CD4-positive, alpha-beta T cell (primary cell): ENCODE measurements at regions of chr17 and their contacts with region 1.

Region 1: DNA sequence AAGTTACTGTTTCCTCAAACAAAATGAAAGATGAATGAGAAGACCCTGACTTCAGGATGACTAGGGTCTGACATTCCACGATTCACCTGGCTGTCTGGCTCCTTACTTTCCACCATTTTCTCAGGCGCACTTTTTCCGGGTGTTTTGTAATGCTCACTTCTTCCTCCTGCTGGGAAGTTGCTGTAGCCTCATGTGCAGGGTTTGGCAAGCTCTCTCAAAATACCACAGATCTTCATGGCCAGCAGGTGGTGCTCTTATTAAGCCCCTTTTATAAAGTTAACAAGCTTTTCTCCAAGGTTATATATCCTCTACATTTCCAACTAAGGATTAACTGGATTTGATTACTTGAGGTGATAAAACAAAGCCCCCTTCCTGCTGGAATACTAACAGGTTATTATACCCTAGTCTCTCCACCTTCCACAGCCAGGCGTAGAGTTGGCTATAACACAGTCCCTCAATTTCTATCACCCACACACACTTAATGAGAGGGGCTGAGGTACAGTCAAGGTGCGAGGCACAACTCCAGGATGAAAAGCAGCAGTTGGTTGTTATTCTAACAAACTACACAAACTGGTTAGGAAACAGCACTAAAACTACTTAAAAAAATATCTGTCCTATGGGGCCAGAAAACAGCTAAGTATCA is 45.4 kb downstream of the STH start:
- DNase-seq: peak in 13 of 14 experiments; percentile 23 to 78 (median 48)
- ATAC-seq: peak; percentile 74
- H3K4me3 ChIP-seq: no peak overlapping the region
- H3K4me3 Mint-ChIP-seq: no peak overlapping the region
- H3K27ac ChIP-seq: no peak overlapping the region
- H3K27ac Mint-ChIP-seq: peak overlapping the region; percentile 54
- H3K4me1 ChIP-seq: no peaks in the 10 kb centered on the region
- H3K4me1 Mint-ChIP-seq: peaks cover 18% of the 10 kb centered on the region
- H3K27me3 ChIP-seq: no peaks in the 10 kb centered on the region
- H3K27me3 Mint-ChIP-seq: no peaks in the 10 kb centered on the region
- CTCF ChIP-seq: peak; percentile 80

Region 2: DNA sequence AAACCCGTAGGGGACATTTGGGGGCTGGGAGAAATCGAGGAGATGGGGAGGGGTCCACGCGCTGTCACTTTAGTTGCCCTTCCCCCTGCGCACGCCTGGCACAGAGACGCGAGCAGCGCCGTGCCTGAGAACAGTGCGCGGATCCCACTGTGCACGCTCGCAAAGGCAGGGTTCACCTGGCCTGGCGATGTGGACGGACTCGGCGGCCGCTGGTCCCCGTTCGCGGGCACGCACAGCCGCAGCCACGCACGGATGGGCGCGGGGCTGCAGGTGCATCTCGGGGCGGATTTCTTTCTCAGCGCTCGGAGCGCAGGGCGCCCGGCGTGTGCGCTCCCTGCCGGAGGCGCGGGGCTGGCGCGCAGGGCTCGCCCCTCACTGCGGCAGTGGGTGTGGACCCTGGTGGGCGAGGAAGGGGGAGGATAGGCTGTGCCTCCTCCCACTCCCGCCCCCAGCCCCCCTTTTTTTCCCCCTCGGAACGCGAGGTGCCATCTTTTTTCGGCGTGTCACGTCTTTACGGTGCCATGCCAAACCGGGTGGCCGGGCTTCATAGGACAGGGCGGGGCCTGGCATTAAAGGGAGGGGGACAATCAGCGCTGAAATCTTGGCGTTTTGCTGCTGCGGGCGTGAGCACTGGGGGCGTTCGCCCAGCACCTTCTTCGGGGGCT is 149.0 kb before region 1 on chr17:
- CTCF ChIA-PET with region 1: no interaction called
- POLR2A ChIA-PET with region 1: no interaction called
- intact Hi-C with region 1: no loop called
- DNase-seq: peak in 10 of 14 experiments; percentile 2 to 68 (median 27)
- ATAC-seq: peak; percentile 47
- H3K4me3 ChIP-seq: peak overlapping the region; percentile 71
- H3K4me3 Mint-ChIP-seq: peak overlapping the region; percentile 89
- H3K27ac ChIP-seq: no peak overlapping the region
- H3K27ac Mint-ChIP-seq: no peak overlapping the region
- H3K4me1 ChIP-seq: peaks cover 41% of the 10 kb centered on the region
- H3K4me1 Mint-ChIP-seq: peaks cover 19% of the 10 kb centered on the region
- H3K27me3 ChIP-seq: peaks cover 33 to 48% of the 10 kb centered on the region in 2 experiments
- H3K27me3 Mint-ChIP-seq: peaks cover 36% of the 10 kb centered on the region
- CTCF ChIP-seq: no peak

Region 3: DNA sequence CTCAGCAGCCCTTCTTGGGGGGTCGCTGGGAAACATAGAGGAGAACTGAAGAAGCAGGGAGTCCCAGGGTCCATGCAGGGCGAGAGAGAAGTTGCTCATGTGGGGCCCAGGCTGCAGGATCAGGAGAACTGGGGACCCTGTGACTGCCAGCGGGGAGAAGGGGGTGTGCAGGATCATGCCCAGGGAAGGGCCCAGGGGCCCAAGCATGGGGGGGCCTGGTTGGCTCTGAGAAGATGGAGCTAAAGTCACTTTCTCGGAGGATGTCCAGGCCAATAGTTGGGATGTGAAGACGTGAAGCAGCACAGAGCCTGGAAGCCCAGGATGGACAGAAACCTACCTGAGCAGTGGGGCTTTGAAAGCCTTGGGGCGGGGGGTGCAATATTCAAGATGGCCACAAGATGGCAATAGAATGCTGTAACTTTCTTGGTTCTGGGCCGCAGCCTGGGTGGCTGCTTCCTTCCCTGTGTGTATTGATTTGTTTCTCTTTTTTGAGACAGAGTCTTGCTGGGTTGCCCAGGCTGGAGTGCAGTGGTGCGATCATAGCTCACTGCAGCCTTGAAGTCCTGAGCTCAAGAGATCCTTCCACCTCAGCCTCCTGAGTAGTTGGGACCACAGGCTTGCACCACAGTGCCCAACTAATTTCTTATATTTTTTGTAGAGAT is 42.0 kb before region 1 on chr17:
- CTCF ChIA-PET with region 1: no interaction called
- POLR2A ChIA-PET with region 1: no interaction called
- intact Hi-C with region 1: loop called (anchors 1 to 2 kb)
- DNase-seq: peak; percentile 53 to 84 (median 72)
- ATAC-seq: peak; percentile 96
- H3K4me3 ChIP-seq: no peak overlapping the region
- H3K4me3 Mint-ChIP-seq: no peak overlapping the region
- H3K27ac ChIP-seq: no peak overlapping the region
- H3K27ac Mint-ChIP-seq: no peak overlapping the region
- H3K4me1 ChIP-seq: peaks cover 7% of the 10 kb centered on the region
- H3K4me1 Mint-ChIP-seq: no peaks in the 10 kb centered on the region
- H3K27me3 ChIP-seq: no peaks in the 10 kb centered on the region
- H3K27me3 Mint-ChIP-seq: peaks cover 5% of the 10 kb centered on the region
- CTCF ChIP-seq: peak; percentile 84